WTC11 (cell line): ENCODE measurements at regions of chr10 and their contacts with region 1.

Region 1: GRCh38 chr10:86899670-86900276 is 57.6 kb downstream of the MMRN2 start:
- DNase-seq: peak; percentile 56
- ATAC-seq: peak; percentile 64
- H3K4me3 Mint-ChIP-seq: no peak overlapping the region
- H3K27ac Mint-ChIP-seq: peak overlapping the region; percentile 85; the same call in 1 of the 2 replicates
- H3K4me1 Mint-ChIP-seq: peaks cover 23% of the 10 kb centered on the region
- H3K27me3 Mint-ChIP-seq: no peaks in the 10 kb centered on the region
- CTCF ChIP-seq: peak; percentile 42; the same call in 1 of the 2 replicates

Region 2: GRCh38 chr10:86693721-86694369 is 205.9 kb before region 1 on chr10:
- CTCF ChIA-PET with region 1: interaction called, 21 read pairs
- POLR2A ChIA-PET with region 1: no interaction called
- DNase-seq: peak; percentile 64
- ATAC-seq: peak; percentile 68
- H3K4me3 Mint-ChIP-seq: no peak overlapping the region
- H3K27ac Mint-ChIP-seq: no peak overlapping the region; the same call in 1 of the 2 replicates
- H3K4me1 Mint-ChIP-seq: peaks cover 38% of the 10 kb centered on the region
- H3K27me3 Mint-ChIP-seq: peaks cover 6% of the 10 kb centered on the region; the same call in 1 of the 2 replicates
- CTCF ChIP-seq: no peak; the same call in 1 of the 2 replicates

Region 3: DNA sequence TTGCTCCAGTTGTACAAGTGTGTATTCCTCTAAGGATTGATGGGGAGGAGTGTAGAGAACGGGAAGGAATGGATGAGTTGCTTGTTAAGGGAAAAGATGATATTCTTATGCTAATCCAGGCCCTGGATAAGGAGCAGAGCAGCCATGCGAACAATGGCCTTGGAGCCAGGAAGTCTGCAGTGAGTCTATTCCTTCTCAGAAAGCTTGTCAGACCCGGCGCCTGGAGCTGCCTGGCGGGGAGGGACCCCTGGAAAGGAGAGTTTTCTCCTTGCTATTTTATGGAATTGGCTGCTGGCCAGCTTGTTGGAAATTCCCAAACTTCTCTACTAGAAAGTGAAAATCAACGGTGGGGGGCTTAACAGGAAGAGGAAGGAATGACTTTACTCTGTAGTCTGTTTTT is 31.4 kb before region 1 on chr10:
- CTCF ChIA-PET with region 1: interaction called, 13 read pairs
- POLR2A ChIA-PET with region 1: no interaction called
- DNase-seq: peak; percentile 85
- ATAC-seq: peak; percentile 86
- H3K4me3 Mint-ChIP-seq: peak overlapping the region; percentile 22
- H3K27ac Mint-ChIP-seq: peak overlapping the region; percentile 99
- H3K4me1 Mint-ChIP-seq: peaks cover 90% of the 10 kb centered on the region
- H3K27me3 Mint-ChIP-seq: no peaks in the 10 kb centered on the region
- CTCF ChIP-seq: no peak